K562 (cell line): ENCODE measurements at regions of chr11 and their contacts with region 1.

Region 1: DNA sequence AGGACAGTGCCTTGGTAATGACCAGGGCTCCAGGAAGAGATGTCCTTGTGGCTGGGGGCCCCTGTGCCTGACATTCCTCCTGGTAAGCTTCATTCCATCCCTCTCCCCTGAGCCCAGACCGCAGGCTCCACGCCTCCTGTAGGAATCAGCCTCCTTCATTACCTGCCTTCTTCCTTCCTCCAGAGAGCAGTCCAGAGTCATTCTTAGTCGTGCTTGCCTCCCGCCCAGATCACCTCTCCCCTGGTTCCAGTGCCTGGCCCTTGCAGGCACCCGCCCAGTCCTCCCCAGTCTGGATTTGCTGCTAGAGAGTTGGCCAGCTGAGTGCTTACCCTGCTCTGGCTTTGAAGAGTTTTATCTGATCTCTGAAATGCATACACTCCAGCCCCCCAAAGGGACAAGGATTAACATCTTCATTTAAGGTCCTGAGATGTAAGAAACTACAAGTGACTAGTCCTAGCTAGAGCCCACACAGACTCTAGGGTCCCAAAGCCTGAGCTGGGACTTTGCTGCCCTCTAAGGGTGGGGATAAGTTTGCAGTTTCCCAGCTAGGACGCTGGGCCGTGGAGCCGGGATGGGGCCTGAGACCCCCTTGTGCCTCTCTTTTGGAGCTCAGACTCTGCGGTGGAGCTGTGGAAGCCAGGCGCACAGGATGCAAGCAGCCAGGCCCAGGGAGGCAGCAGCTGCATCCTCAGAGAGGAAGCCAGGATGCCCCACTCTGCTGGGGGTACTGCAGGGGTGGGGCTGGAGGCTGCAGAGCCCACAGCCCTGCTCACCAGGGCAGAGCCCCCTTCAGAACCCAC is 1.6 kb downstream of the NR1H3 start:
- DNase-seq: peak in 2 of 4 experiments; percentile 67 to 68
- ATAC-seq: peak; percentile 82
- H3K4me3 ChIP-seq: no peak overlapping the region
- H3K27ac ChIP-seq: no peak overlapping the region
- H3K4me1 ChIP-seq: peaks cover 45 to 46% of the 10 kb centered on the region in 2 experiments
- H3K27me3 ChIP-seq: no peaks in the 10 kb centered on the region
- CTCF ChIP-seq: peak; percentile 74 to 83 (median 81)
- EP300 ChIP-seq: no peak
- POLR2A ChIP-seq: no peak
- RAD21 ChIP-seq: peak; percentile 28 to 65; a peak in 3 of 4 replicates

Region 2: DNA sequence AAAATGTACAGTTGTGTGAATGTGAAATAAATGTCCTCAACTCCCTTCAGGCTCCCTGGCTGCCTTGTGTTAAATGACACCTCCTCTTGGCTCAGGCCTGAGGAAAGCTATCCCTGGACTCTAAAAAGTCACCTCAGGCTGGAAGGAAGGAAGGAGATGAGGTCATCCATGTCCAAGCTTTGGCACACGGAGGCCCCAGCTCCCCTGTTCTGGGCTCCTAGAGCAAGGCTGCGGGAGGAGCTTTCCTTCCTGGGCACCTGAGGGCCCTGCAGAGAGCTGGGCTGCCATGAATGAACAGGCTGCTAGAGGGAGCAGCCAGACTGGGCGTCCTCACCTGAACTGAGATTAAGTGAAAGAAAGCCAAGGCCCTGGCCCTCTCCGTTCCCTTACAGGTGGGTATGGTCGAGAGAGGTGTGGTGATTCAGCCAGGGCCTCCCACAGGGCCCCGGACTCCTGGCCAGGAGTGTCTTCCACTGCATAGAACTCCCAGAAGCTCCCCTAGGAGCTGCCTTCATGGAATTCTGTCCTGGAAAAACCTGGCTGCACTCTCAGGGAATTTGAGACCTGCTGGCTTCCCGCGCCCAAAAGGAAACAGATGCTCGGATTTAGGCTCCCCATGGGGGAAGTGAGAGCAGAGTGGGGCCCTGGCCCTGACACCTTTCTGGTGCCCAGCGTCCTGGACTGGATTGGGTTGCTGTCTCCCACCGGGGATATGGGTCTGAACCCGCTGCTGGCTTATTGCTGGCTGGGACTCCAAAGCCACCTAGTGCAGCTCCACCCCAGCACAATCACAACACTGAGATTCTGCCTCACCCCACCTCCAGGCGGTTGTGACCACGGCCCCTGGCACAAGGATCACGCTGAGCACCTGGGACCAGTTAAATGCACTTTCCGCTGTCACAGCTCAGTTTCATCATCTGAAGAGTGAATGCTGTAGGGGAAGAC is 70.9 kb after region 1 on chr11:
- CTCF ChIA-PET with region 1: no interaction called
- POLR2A ChIA-PET with region 1: no interaction called
- in situ Hi-C with region 1: no loop called
- intact Hi-C with region 1: no loop called
- DNase-seq: no peak
- ATAC-seq: peak; percentile 40
- H3K4me3 ChIP-seq: no peak overlapping the region
- H3K27ac ChIP-seq: no peak overlapping the region
- H3K4me1 ChIP-seq: peaks cover 0 to 18% of the 10 kb centered on the region in 2 experiments; a peak in 1 of 5 replicates
- H3K27me3 ChIP-seq: no peaks in the 10 kb centered on the region
- CTCF ChIP-seq: peak in 2 of 3 experiments; percentile 5 to 11; a peak in 1 of 6 replicates
- EP300 ChIP-seq: no peak
- POLR2A ChIP-seq: no peak
- RAD21 ChIP-seq: no peak

Region 3: GRCh38 chr11:47355283-47356128 is 96.1 kb after region 1 on chr11:
- CTCF ChIA-PET with region 1: interaction called, 46 read pairs
- POLR2A ChIA-PET with region 1: no interaction called
- in situ Hi-C with region 1: no loop called
- intact Hi-C with region 1: loop called (anchors 1 kb)
- DNase-seq: peak; percentile 78 to 96 (median 82)
- ATAC-seq: peak; percentile 96
- H3K4me3 ChIP-seq: no peak overlapping the region
- H3K27ac ChIP-seq: no peak overlapping the region; the same call in 2 of the 3 replicates
- H3K4me1 ChIP-seq: peaks cover 0 to 48% of the 10 kb centered on the region in 2 experiments; a peak in 3 of 5 replicates
- H3K27me3 ChIP-seq: no peaks in the 10 kb centered on the region
- CTCF ChIP-seq: peak; percentile 99 to 100 (median 100)
- EP300 ChIP-seq: no peak
- POLR2A ChIP-seq: no peak
- RAD21 ChIP-seq: peak; percentile 91 to 97